ENCODE measurements at regions of chr16 and their contacts with region 1.

Region 1: DNA sequence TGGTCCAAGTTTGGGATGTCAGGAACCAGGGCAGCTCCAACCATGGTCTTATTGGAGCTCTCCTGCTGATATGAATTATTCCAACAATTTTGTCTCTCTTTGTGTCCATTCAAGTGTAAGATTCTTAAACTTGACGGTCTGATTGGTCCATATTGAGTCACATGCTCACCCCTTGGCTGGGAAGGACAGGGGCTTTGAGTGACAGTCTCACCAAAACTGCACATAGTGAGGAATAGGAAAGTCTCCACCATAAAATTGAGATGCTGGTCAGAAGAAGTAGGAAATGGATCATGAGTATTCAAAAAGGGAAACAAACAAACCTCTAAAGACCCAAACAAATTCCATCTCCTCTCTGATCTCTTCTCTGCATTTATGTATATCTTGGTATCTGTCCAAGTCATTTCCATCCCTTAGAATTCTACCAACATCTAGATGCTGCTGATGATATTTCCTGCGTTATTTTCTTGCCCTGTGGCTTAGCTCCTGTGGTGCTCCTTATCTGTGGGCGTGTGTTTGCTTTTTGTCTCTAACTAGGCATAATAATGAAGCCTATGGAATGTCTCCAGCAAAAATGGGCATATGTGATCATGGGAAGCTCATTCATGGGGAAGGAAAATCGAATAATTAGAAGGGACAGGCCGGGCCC is 33.7 kb downstream of the SHISA9 start:
- DNase-seq: no peak
- ATAC-seq: no peak
- H3K4me3 ChIP-seq: no peak overlapping the region
- H3K27ac ChIP-seq: no peak overlapping the region
- H3K4me1 ChIP-seq: no peaks in the 10 kb centered on the region
- H3K27me3 ChIP-seq: no peaks in the 10 kb centered on the region
- CTCF ChIP-seq: no peak

Region 2: DNA sequence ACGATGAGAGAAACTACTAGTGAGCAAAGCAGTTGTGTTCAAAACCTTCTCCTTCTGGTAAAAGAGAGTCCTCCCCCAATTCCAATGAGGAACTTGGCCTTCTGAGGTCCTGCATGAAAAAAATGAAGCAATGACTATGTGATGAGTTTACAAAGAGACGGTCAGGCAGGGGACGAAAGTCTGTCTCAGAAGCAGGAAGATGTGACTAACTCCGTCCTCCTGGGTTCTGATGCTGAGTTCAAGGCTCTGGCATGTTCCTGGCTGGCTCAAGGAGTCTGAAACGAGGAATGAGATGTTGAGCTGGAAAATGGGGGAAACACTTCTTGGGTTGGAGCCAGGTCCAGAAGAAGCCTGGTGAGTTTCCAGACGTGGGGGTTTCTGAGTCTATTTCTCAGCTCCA is 261.0 kb before region 1 on chr16:
- intact Hi-C with region 1: no loop called
- DNase-seq: no peak
- ATAC-seq: no peak
- H3K4me3 ChIP-seq: no peak overlapping the region
- H3K27ac ChIP-seq: no peak overlapping the region
- H3K4me1 ChIP-seq: no peaks in the 10 kb centered on the region
- H3K27me3 ChIP-seq: no peaks in the 10 kb centered on the region
- CTCF ChIP-seq: no peak

Region 3: GRCh38 chr16:12869698-12870427 is 65.2 kb before region 1 on chr16:
- intact Hi-C with region 1: loop called in 1 of 2 experiments (anchors 10 kb)
- DNase-seq: no peak
- ATAC-seq: no peak
- H3K4me3 ChIP-seq: no peak overlapping the region
- H3K27ac ChIP-seq: no peak overlapping the region
- H3K4me1 ChIP-seq: no peaks in the 10 kb centered on the region
- H3K27me3 ChIP-seq: no peaks in the 10 kb centered on the region
- CTCF ChIP-seq: no peak

Region 4: DNA sequence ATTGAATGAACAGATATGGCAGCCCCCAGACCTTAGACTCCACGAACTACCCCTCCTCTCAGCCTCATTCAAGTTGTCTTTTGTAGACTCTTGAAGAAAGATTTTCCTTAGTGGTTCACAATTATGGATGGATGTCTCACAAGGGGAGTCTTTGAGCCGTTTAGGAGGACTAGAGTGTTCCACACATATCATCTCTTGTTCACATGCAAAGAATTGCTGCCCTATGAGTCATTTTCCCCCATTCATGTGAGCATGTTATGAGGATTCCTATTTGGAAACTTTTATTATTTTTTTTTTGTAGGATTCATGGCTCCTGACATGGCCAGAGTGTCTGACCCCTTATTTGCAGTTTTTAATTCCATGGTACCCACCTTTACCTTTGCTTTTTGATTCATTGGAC is 203.5 kb after region 1 on chr16:
- intact Hi-C with region 1: no loop called
- DNase-seq: no peak
- ATAC-seq: no peak
- H3K4me3 ChIP-seq: no peak overlapping the region
- H3K27ac ChIP-seq: no peak overlapping the region
- H3K4me1 ChIP-seq: no peaks in the 10 kb centered on the region
- H3K27me3 ChIP-seq: peaks cover 0 to 2% (median 0%) of the 10 kb centered on the region in 3 donors
- CTCF ChIP-seq: no peak